HCT116 (cell line): ENCODE measurements at regions of chr16 and their contacts with region 1.

Region 1: GRCh38 chr16:84062734-84063640 is 20.4 kb upstream of the SLC38A8 start:
- DNase-seq: peak; percentile 52
- ATAC-seq: peak; percentile 99
- H3K4me3 ChIP-seq: no peak overlapping the region
- H3K27ac ChIP-seq: no peak overlapping the region
- H3K4me1 ChIP-seq: peaks cover 0 to 3% of the 10 kb centered on the region in 2 experiments; a peak in 1 of 4 replicates
- H3K27me3 ChIP-seq: no peaks in the 10 kb centered on the region
- CTCF ChIP-seq: peak; percentile 92 to 100 (median 98)
- POLR2A ChIP-seq: no peak
- RAD21 ChIP-seq: peak; percentile 78

Region 2: DNA sequence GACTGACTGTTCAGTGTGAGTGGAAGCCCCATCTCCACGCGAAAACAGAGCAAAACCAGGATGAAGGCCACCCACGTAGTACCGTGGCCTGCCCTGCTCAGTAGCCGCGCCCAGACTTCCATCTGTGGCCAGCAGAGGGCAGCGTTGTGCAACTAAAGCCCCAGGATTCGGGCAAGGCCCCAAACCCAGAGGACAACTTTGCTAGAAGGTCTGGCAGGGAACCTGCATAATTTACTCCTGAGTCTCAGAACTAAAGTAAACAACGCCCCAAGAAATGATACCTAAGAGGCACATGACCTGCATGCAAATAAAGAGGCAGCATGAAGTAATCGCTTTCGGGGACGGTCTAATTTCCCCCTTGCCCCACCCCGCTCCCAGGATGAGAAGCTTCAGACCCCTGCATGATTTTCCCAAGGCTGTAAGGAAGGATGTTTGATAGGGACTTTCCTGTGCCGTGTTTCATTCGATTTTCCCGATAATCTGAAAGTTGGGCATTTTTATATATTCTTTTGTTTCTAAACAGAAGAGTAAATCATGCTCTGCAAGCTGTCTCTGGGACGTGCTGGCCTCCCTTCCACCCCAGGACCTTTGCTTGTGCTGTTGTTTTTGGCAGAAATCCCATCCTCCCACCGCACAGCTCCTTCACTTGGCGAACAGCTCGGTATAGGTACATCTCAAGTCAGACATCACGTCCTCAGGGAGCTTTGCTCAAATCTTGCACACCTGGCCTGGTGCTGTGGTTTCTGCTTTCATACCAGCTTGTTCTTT is 236.7 kb before region 1 on chr16:
- CTCF ChIA-PET with region 1: interaction called, 4 read pairs
- POLR2A ChIA-PET with region 1: no interaction called
- RAD21 ChIA-PET with region 1: no interaction called
- intact Hi-C with region 1: loop called (anchors 1 kb)
- DNase-seq: peak; percentile 64
- ATAC-seq: peak; percentile 94
- H3K4me3 ChIP-seq: peak overlapping the region in 1 of 2 experiments; percentile 8; a peak in 1 of 4 replicates
- H3K27ac ChIP-seq: no peak overlapping the region
- H3K4me1 ChIP-seq: peaks cover 6 to 18% of the 10 kb centered on the region in 2 experiments; a peak in 3 of 4 replicates
- H3K27me3 ChIP-seq: no peaks in the 10 kb centered on the region
- CTCF ChIP-seq: peak; percentile 94 to 99 (median 97)
- POLR2A ChIP-seq: no peak
- RAD21 ChIP-seq: peak; percentile 99

Region 3: DNA sequence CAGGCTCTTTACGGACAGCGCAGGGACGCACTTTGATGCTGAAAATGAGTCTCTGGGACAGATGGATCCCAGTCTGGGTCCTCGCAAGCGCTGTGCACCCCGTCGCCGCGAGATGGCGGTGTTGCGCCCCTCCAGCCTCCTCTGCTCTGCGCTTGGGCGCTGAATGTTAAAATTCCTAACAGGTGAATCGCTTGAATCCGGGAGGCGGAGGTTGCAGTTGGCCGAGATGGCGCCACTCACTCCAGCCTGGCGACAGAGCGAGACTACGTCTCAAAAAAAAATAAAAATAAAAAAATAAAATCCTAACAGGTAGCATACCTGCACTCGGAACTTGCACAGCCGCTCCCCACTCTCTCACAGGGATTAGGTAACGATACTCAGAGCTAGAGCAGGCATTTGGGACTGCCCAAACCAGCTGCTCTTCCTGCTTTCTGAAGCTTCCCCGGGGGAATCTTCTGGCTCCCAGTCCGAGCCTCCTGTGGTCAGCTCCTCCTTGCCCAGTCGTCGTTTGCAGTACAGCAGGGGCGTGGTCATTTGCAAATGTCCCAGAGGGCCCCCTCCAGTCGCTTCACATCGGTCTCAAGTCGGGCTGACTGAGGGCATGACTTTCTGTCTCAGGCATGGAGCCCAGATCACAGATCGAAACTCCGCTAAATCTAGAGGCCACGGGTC is 136.1 kb before region 1 on chr16:
- CTCF ChIA-PET with region 1: interaction called, 13 read pairs
- POLR2A ChIA-PET with region 1: no interaction called
- RAD21 ChIA-PET with region 1: no interaction called
- intact Hi-C with region 1: loop called (anchors 1 kb)
- DNase-seq: peak; percentile 86
- ATAC-seq: peak; percentile 95
- H3K4me3 ChIP-seq: peak overlapping the region; percentile 52 to 58
- H3K27ac ChIP-seq: peak overlapping the region; percentile 63
- H3K4me1 ChIP-seq: peaks cover 7 to 26% of the 10 kb centered on the region in 2 experiments
- H3K27me3 ChIP-seq: no peaks in the 10 kb centered on the region
- CTCF ChIP-seq: peak; percentile 95 to 100 (median 99)
- POLR2A ChIP-seq: peak; percentile 30
- RAD21 ChIP-seq: peak; percentile 97

Region 4: DNA sequence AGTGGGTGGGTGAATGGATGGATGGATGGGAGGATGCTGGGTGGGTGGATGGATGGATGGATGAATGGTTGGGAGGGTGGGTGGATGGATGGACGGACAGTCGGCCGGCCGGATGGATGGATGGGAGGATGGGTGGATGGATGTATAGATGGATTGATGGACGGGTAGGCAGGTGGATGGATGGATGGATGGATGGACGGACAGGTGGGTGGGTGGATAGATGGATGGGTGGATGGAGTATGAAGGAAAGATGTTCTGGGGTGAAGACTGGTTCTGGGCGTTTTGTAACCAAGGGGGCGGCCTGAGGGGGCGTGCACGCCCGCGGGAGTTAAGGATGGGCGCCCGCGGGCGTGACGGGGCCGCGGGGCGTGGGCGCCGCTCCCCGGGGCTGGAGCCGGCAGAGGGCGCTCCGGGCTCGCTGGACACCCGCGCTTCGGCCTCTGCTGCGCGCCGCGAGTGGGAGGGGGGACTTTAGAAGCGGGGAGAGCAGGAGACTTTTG is 95.1 kb before region 1 on chr16 and contains the start of gene NECAB2:
- CTCF ChIA-PET with region 1: interaction called, 5 read pairs
- POLR2A ChIA-PET with region 1: no interaction called
- RAD21 ChIA-PET with region 1: no interaction called
- intact Hi-C with region 1: loop called (anchors 1 kb)
- DNase-seq: no peak
- ATAC-seq: peak; percentile 86
- H3K4me3 ChIP-seq: no peak within 1 kb of the TSS
- H3K27ac ChIP-seq: no peak within 1 kb of the TSS
- H3K4me1 ChIP-seq: no peaks in the 10 kb centered on the region
- H3K27me3 ChIP-seq: no peaks in the 10 kb centered on the region
- CTCF ChIP-seq: peak; percentile 55 to 79 (median 69); a peak in 5 of 6 replicates
- POLR2A ChIP-seq: no peak
- RAD21 ChIP-seq: peak; percentile 83
- total RNA-seq, gene NECAB2: 0.61 TPM

Region 5: DNA sequence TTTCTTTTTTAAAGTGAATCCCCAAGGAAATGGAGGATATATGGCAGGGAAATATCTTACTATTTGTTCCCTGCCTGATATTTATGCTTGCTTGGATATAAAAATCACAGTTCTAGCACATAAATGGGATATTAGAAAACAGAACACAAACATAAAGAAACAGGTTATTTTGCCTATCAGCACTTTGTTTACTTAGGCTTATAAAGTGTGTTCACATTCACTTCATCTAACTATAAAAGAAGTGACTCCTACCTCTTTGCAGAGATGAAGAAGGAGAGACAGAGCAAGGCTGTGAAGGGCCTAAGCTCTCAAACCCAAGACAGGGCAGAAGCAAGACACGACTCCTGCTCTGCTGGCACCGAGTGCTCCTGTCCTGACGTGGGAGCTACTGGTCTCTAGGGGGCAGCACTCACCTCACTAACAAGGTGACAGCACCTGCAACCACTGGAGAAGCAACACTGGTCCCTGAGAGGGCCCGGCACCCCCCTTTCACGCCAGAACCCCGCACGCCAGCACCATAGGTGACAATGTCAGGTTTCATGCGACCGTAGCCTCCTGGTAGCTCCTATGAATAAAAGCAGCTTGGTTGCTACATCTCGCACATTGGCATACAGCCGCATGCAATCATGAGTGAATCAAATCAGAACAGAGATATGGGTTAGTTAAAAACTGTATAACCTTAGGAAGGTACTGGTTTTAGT is 21.7 kb after region 1 on chr16:
- CTCF ChIA-PET with region 1: interaction called, 33 read pairs
- POLR2A ChIA-PET with region 1: no interaction called
- RAD21 ChIA-PET with region 1: no interaction called
- intact Hi-C with region 1: no loop called
- DNase-seq: peak; percentile 64
- ATAC-seq: peak; percentile 97
- H3K4me3 ChIP-seq: no peak overlapping the region
- H3K27ac ChIP-seq: no peak overlapping the region
- H3K4me1 ChIP-seq: no peaks in the 10 kb centered on the region
- H3K27me3 ChIP-seq: no peaks in the 10 kb centered on the region
- CTCF ChIP-seq: peak; percentile 87 to 99 (median 98)
- POLR2A ChIP-seq: no peak
- RAD21 ChIP-seq: peak; percentile 94

Region 6: GRCh38 chr16:84095466-84095865 is 32.5 kb after region 1 on chr16:
- CTCF ChIA-PET with region 1: no interaction called
- POLR2A ChIA-PET with region 1: no interaction called
- RAD21 ChIA-PET with region 1: no interaction called
- intact Hi-C with region 1: no loop called
- DNase-seq: no peak
- ATAC-seq: no peak
- H3K4me3 ChIP-seq: no peak overlapping the region
- H3K27ac ChIP-seq: no peak overlapping the region
- H3K4me1 ChIP-seq: peaks cover 7 to 11% of the 10 kb centered on the region in 2 experiments
- H3K27me3 ChIP-seq: no peaks in the 10 kb centered on the region
- CTCF ChIP-seq: no peak
- POLR2A ChIP-seq: no peak
- RAD21 ChIP-seq: no peak

Region 7: GRCh38 chr16:84315394-84315793 is 252.4 kb after region 1 on chr16:
- CTCF ChIA-PET with region 1: no interaction called
- POLR2A ChIA-PET with region 1: no interaction called
- RAD21 ChIA-PET with region 1: no interaction called
- intact Hi-C with region 1: no loop called
- DNase-seq: no peak
- ATAC-seq: no peak
- H3K4me3 ChIP-seq: no peak overlapping the region
- H3K27ac ChIP-seq: no peak overlapping the region
- H3K4me1 ChIP-seq: peaks cover 6 to 15% of the 10 kb centered on the region in 2 experiments; a peak in 3 of 4 replicates
- H3K27me3 ChIP-seq: no peaks in the 10 kb centered on the region
- CTCF ChIP-seq: 0 out of 6 replicates have a peak, but pooled peaks of 1 of the 3 experiments have one; percentile 8
- POLR2A ChIP-seq: no peak
- RAD21 ChIP-seq: no peak